ENCODE measurements at regions of chr4 and their contacts with region 1.

Region 1: GRCh38 chr4:87848622-87849351 is 16.0 kb downstream of the MEPE start:
- DNase-seq: peak; percentile 19 to 61
- ATAC-seq: peak; percentile 83 to 92 (median 90)
- H3K4me3 ChIP-seq: no peak overlapping the region
- H3K4me3 Mint-ChIP-seq: peak overlapping the region; percentile 38
- H3K27ac ChIP-seq: no peak overlapping the region
- H3K27ac Mint-ChIP-seq: no peak overlapping the region
- H3K4me1 ChIP-seq: no peaks in the 10 kb centered on the region
- H3K4me1 Mint-ChIP-seq: peaks cover 10 to 17% of the 10 kb centered on the region in 2 donors
- H3K27me3 ChIP-seq: no peaks in the 10 kb centered on the region
- H3K27me3 Mint-ChIP-seq: peaks cover 23 to 44% of the 10 kb centered on the region in 2 donors
- CTCF ChIP-seq: peak; percentile 62

Region 2: DNA sequence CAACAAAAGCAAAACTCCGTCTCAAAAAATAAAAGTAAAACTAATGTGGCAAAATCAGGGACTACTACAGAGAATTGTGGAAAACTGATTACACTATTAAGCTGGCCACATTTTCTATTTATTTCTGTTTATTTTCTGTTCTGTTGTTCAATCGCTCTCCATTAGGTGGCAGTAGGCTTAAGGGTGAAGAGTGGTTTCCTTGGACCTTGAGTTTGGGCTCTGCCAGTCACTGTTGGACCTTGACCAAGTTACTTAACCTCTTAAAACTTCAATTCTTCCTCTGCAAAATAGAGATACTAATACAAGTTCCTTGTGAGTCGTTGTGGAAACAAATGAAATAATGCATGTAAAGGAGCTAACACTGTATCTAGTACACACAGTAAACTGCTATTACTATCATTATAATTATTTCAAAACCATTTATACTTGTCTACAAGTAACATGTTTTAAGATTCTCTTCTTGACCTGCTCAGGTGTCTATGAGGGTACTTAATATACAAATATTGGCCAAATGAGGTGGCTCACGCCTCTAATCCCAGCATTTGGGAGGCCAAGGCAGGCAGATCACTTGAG is 473.0 kb before region 1 on chr4:
- intact Hi-C with region 1: loop called (anchors 10 kb)
- DNase-seq: peak in 1 of 2 donors; percentile 67
- ATAC-seq: peak; percentile 71 to 73 (median 73)
- H3K4me3 ChIP-seq: no peak overlapping the region
- H3K4me3 Mint-ChIP-seq: no peak overlapping the region
- H3K27ac ChIP-seq: no peak overlapping the region
- H3K27ac Mint-ChIP-seq: no peak overlapping the region
- H3K4me1 ChIP-seq: no peaks in the 10 kb centered on the region
- H3K4me1 Mint-ChIP-seq: peaks cover 0 to 5% of the 10 kb centered on the region in 2 donors
- H3K27me3 ChIP-seq: no peaks in the 10 kb centered on the region
- H3K27me3 Mint-ChIP-seq: no peaks in the 10 kb centered on the region
- CTCF ChIP-seq: peak; percentile 73

Region 3: GRCh38 chr4:87451537-87451936 is 397.2 kb before region 1 on chr4:
- intact Hi-C with region 1: no loop called
- DNase-seq: no peak
- ATAC-seq: no peak
- H3K4me3 ChIP-seq: no peak overlapping the region
- H3K4me3 Mint-ChIP-seq: no peak overlapping the region
- H3K27ac ChIP-seq: no peak overlapping the region
- H3K27ac Mint-ChIP-seq: no peak overlapping the region
- H3K4me1 ChIP-seq: no peaks in the 10 kb centered on the region
- H3K4me1 Mint-ChIP-seq: no peaks in the 10 kb centered on the region
- H3K27me3 ChIP-seq: no peaks in the 10 kb centered on the region
- H3K27me3 Mint-ChIP-seq: no peaks in the 10 kb centered on the region
- CTCF ChIP-seq: no peak

Region 4: GRCh38 chr4:87559109-87559837 is 289.5 kb before region 1 on chr4:
- intact Hi-C with region 1: loop called (anchors 10 kb)
- DNase-seq: peak in 1 of 2 donors; percentile 66
- ATAC-seq: peak; percentile 84 to 98 (median 98)
- H3K4me3 ChIP-seq: no peak overlapping the region
- H3K4me3 Mint-ChIP-seq: peak overlapping the region; percentile 31
- H3K27ac ChIP-seq: no peak overlapping the region
- H3K27ac Mint-ChIP-seq: peak overlapping the region in 1 of 2 donors; percentile 53
- H3K4me1 ChIP-seq: peaks cover 9% of the 10 kb centered on the region
- H3K4me1 Mint-ChIP-seq: peaks cover 9 to 13% of the 10 kb centered on the region in 2 donors
- H3K27me3 ChIP-seq: no peaks in the 10 kb centered on the region
- H3K27me3 Mint-ChIP-seq: no peaks in the 10 kb centered on the region
- CTCF ChIP-seq: no peak

Region 5: DNA sequence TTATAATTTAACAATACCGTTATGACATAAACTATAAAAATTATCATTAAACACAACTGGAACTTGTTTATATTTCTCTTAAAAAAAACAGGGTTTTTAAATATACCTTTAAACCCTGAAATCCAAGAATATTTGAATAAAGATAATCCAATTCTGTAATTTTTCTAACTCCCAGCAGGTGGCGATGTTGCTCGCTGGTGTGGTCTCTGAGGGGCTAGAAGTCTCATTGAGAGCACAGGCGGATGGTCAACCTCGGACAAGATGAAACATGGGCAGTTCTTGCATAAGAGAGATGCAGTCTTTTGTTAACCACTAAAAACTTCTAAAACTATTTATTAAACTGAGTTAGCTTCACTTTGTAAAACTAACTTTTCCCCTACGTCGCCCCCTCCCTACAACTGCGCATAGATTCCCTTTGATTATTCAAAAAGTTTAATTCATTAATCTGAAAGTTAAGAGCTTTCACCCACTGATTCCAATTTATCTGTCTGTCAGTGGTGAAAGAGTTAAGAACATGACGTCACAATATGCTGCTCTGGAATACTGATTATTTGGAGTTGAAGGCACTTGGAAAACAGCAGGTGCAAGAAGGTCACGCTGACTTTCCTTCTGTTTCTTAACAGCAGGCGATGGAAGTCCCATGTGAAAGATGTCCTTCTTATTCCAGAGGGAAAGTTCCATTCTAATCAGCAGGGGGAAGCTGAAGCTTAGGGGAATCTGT is 169.2 kb before region 1 on chr4:
- intact Hi-C with region 1: loop called (anchors 5 kb)
- DNase-seq: peak in 1 of 2 donors; percentile 62
- ATAC-seq: peak in 1 of 3 donors; percentile 37
- H3K4me3 ChIP-seq: no peak overlapping the region
- H3K4me3 Mint-ChIP-seq: no peak overlapping the region
- H3K27ac ChIP-seq: no peak overlapping the region
- H3K27ac Mint-ChIP-seq: no peak overlapping the region
- H3K4me1 ChIP-seq: no peaks in the 10 kb centered on the region
- H3K4me1 Mint-ChIP-seq: no peaks in the 10 kb centered on the region
- H3K27me3 ChIP-seq: no peaks in the 10 kb centered on the region
- H3K27me3 Mint-ChIP-seq: no peaks in the 10 kb centered on the region
- CTCF ChIP-seq: peak; percentile 72

Region 6: GRCh38 chr4:87872028-87872427 is 23.2 kb after region 1 on chr4:
- intact Hi-C with region 1: no loop called
- DNase-seq: no peak
- ATAC-seq: no peak
- H3K4me3 ChIP-seq: no peak overlapping the region
- H3K4me3 Mint-ChIP-seq: no peak overlapping the region
- H3K27ac ChIP-seq: no peak overlapping the region
- H3K27ac Mint-ChIP-seq: no peak overlapping the region
- H3K4me1 ChIP-seq: no peaks in the 10 kb centered on the region
- H3K4me1 Mint-ChIP-seq: peaks cover 0 to 6% of the 10 kb centered on the region in 2 donors
- H3K27me3 ChIP-seq: no peaks in the 10 kb centered on the region
- H3K27me3 Mint-ChIP-seq: peaks cover 11 to 27% of the 10 kb centered on the region in 2 donors
- CTCF ChIP-seq: no peak

Region 7: GRCh38 chr4:87973283-87974169 is 124.7 kb after region 1 on chr4:
- intact Hi-C with region 1: loop called (anchors 1 kb)
- DNase-seq: peak in 1 of 2 donors; percentile 58
- ATAC-seq: peak; percentile 68 to 90 (median 81)
- H3K4me3 ChIP-seq: no peak overlapping the region
- H3K4me3 Mint-ChIP-seq: no peak overlapping the region
- H3K27ac ChIP-seq: no peak overlapping the region
- H3K27ac Mint-ChIP-seq: no peak overlapping the region
- H3K4me1 ChIP-seq: peaks cover 4% of the 10 kb centered on the region
- H3K4me1 Mint-ChIP-seq: peaks cover 5 to 6% of the 10 kb centered on the region in 2 donors
- H3K27me3 ChIP-seq: peaks cover 29% of the 10 kb centered on the region
- H3K27me3 Mint-ChIP-seq: peaks cover 35 to 53% of the 10 kb centered on the region in 2 donors
- CTCF ChIP-seq: peak; percentile 81

Region 8: GRCh38 chr4:88211473-88212252 is 362.9 kb after region 1 on chr4:
- intact Hi-C with region 1: loop called (anchors 2 kb)
- DNase-seq: peak in 1 of 2 donors; percentile 76
- ATAC-seq: peak; percentile 64 to 68 (median 67)
- H3K4me3 ChIP-seq: no peak overlapping the region
- H3K4me3 Mint-ChIP-seq: no peak overlapping the region
- H3K27ac ChIP-seq: no peak overlapping the region
- H3K27ac Mint-ChIP-seq: no peak overlapping the region
- H3K4me1 ChIP-seq: no peaks in the 10 kb centered on the region
- H3K4me1 Mint-ChIP-seq: peaks cover 0 to 4% of the 10 kb centered on the region in 2 donors
- H3K27me3 ChIP-seq: no peaks in the 10 kb centered on the region
- H3K27me3 Mint-ChIP-seq: peaks cover 6 to 10% of the 10 kb centered on the region in 2 donors
- CTCF ChIP-seq: peak; percentile 75

Measured in natural killer cell (primary cell).